ENCODE measurements at regions of chr1 and their contacts with region 1.

Region 1: DNA sequence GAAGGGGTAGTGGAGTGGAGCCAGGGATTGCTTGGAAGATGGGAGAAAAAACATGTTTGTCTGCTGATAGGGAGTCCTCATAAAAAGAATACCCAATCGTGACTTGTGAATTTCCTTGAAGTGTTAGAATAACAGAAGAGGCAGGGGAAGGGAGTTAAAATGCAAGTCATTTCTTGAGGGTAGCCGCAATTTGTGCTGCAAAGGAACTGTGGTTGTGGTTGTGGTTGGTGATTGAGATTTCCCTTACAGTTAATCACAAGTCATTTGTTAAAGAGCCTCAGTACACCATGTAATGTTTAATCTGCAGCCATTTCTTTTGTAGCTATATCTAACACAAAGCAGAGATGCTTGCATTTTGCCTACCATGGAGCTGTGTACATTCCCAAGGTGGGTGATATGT is 38.5 kb upstream of the EGLN1 start:
- DNase-seq: peak; percentile 72
- H3K4me3 Mint-ChIP-seq: no peak overlapping the region
- H3K27ac Mint-ChIP-seq: peak overlapping the region; percentile 32
- H3K4me1 Mint-ChIP-seq: peaks cover 45% of the 10 kb centered on the region
- H3K27me3 Mint-ChIP-seq: peaks cover 64% of the 10 kb centered on the region

Region 2: GRCh38 chr1:230972855-230973271 is 487.8 kb before region 1 on chr1:
- intact Hi-C with region 1: loop called (anchors 2 kb)
- DNase-seq: peak; percentile 61
- H3K4me3 Mint-ChIP-seq: peak overlapping the region; percentile 59
- H3K27ac Mint-ChIP-seq: peak overlapping the region; percentile 75
- H3K4me1 Mint-ChIP-seq: peaks cover 64% of the 10 kb centered on the region
- H3K27me3 Mint-ChIP-seq: no peaks in the 10 kb centered on the region

Region 3: DNA sequence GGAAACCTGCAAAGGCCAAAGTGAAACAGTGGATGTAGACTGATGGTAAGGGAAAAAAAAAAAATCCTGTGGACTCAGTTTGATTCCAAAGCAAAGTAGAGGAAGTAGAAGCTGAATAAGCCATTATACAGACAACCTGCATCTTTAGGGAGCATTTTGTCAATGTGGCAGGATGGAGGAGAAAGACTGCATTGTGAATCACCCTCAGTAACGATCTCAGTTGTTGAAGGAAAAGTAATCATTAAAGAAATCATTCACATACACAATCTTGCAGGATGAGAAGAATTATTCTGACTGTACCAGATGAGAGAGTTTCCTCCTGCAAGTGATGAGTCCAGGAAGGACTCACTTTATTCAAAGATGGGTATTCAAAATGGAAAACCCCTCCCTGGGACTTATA is 343.9 kb before region 1 on chr1:
- intact Hi-C with region 1: no loop called
- DNase-seq: no peak
- H3K4me3 Mint-ChIP-seq: no peak overlapping the region
- H3K27ac Mint-ChIP-seq: no peak overlapping the region
- H3K4me1 Mint-ChIP-seq: no peaks in the 10 kb centered on the region
- H3K27me3 Mint-ChIP-seq: peaks cover 21% of the 10 kb centered on the region

Region 4: GRCh38 chr1:231272880-231273279 is 187.7 kb before region 1 on chr1:
- intact Hi-C with region 1: loop called (anchors 2 kb)
- DNase-seq: peak; percentile 27
- H3K4me3 Mint-ChIP-seq: peak overlapping the region; percentile 83
- H3K27ac Mint-ChIP-seq: peak overlapping the region; percentile 100
- H3K4me1 Mint-ChIP-seq: peaks cover 39% of the 10 kb centered on the region
- H3K27me3 Mint-ChIP-seq: no peaks in the 10 kb centered on the region

Region 5: DNA sequence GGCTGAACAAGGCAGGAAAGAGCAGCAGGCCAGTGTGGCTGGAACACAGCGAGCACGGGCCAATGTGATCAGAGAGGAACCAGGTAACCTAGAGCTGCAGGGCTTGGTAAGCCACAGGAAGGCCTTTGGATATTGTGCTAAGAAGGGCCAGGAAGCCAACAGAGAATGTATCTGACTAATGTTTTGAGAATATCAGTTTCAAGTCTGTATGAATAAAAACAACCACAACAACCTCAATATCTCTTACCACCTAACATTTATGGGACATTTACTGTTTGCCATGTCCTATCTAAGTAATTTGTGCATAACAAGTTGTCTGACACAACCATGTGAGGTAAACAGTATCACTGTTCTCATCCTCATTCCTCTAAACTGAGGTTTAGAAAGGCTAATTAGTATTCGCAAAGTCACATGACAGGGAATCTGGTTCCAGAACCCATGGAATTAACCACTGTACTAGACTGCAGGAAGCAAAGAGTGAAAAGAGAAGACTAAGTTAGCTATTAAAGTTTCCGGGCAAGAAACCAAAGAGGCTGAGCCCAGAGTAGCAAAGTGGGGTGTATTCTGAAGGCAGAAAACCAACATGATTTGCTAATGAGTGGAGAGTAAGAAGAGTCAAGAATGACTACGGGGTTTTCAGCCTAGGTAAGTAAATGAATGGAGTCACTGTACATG is 83.6 kb before region 1 on chr1:
- intact Hi-C with region 1: loop called (anchors 1 kb)
- DNase-seq: peak; percentile 13
- H3K4me3 Mint-ChIP-seq: peak overlapping the region; percentile 6
- H3K27ac Mint-ChIP-seq: peak overlapping the region; percentile 78
- H3K4me1 Mint-ChIP-seq: peaks cover 43% of the 10 kb centered on the region
- H3K27me3 Mint-ChIP-seq: no peaks in the 10 kb centered on the region

Region 6: DNA sequence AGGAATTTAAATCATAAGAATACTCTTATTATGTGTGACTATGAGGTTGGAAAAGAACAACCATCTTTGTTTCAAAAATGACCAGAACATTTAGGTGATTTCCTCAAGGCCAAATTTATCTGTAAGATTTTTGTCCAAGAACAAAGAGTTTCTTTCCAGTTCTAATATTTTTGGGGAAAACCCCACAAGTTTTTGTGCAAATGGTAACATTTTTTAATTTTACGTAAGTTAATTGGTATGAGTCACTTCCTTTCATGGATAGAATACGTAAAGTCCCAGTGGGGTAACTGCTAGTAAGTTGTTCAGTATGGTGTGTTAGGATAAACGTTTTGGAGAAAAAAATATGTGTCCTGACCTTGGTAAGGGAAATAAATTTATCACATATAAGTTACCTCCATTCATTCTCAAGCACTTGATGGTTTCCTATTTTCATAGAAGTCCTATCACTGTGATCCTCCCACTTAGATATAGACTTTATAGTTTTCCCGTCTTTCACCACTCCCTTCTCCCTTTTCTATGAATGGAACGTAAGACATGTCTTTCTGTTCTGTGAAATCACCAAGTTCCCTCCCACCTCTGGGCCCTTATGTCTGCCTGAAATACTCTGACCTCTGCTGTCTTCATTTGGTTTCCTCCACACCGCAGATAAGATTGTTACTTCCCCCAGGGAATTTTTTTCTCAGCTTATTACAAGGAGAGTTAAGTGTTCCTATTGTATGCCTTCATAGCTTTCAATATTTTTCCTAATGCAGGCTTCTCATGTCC is 33.0 kb after region 1 on chr1:
- intact Hi-C with region 1: no loop called
- DNase-seq: no peak
- H3K4me3 Mint-ChIP-seq: no peak overlapping the region
- H3K27ac Mint-ChIP-seq: no peak overlapping the region
- H3K4me1 Mint-ChIP-seq: peaks cover 6% of the 10 kb centered on the region
- H3K27me3 Mint-ChIP-seq: peaks cover 10% of the 10 kb centered on the region

Region 7: GRCh38 chr1:231571904-231572303 is 111.3 kb after region 1 on chr1:
- intact Hi-C with region 1: no loop called
- DNase-seq: no peak
- H3K4me3 Mint-ChIP-seq: no peak overlapping the region
- H3K27ac Mint-ChIP-seq: no peak overlapping the region
- H3K4me1 Mint-ChIP-seq: no peaks in the 10 kb centered on the region
- H3K27me3 Mint-ChIP-seq: no peaks in the 10 kb centered on the region

Region 8: DNA sequence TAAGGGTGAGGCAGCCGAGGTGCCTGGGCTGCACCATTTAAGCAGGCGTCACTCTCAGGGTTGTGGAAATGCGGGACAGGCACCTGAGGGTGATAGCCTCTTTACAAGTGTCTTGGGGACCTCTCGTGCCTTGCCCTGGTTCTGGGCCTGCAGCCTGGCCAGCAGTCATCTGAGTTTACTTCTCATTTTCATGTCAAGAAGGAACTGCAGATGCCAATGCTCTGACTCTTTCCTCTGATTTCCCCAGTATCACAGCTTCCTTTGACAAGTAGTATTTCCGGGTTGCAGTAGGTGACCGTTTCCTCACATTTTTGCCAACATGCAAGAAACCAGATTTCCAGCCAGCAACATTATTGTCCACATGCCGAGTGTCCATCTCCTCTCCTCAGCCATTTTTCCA is 452.9 kb after region 1 on chr1:
- intact Hi-C with region 1: no loop called
- DNase-seq: no peak
- H3K4me3 Mint-ChIP-seq: no peak overlapping the region
- H3K27ac Mint-ChIP-seq: no peak overlapping the region
- H3K4me1 Mint-ChIP-seq: peaks cover 32% of the 10 kb centered on the region
- H3K27me3 Mint-ChIP-seq: peaks cover 19% of the 10 kb centered on the region